Right ventricle myocardium superior (tissue), 1 donor: ENCODE measurements at regions of chr1 and their contacts with region 1.

Region 1: DNA sequence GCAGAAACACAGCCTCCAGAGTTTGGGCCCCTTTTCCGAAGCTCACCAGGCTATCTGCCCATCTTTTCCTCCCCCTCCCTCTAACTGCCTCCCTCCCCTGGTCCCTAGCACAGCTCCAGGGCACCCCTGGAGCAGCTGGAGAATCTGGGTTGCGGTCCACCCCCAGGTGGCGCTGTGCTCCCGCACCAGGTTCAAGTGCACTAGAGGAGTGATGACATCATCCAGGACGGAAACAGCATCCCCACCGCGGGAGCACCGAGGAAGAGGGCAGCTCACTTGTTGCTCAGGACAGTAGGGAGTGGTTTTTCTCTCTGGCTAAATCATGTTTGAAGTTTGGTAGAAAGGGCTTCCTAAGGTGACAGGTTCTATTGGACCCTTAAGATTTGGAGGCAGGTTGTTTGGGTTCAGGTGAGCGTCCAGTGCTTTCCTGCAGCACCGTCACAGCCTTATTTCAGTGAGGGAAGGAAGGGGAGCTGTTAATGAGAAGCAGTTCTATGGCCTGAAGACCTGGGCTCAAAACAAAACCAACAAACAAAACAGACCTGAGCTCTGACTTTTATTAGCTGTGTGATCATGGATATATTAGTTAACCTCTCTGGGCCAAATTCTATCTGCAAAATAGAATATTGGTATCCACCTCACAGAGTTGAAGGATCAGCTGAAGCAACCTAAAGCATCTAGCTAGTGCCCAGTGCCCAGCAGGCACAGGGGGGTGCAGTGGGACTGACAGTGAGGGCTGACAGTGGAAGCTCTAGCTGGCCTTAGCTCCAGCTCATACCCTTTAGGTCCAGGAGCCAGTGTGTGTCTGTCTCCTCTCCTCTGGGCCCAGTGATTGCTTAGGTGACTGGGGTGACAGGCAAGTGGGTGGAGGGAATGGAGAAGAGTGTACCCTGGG is 7.5 kb downstream of the SHISA4 start:
- DNase-seq: peak; percentile 94
- ATAC-seq: peak; percentile 91

Region 2: DNA sequence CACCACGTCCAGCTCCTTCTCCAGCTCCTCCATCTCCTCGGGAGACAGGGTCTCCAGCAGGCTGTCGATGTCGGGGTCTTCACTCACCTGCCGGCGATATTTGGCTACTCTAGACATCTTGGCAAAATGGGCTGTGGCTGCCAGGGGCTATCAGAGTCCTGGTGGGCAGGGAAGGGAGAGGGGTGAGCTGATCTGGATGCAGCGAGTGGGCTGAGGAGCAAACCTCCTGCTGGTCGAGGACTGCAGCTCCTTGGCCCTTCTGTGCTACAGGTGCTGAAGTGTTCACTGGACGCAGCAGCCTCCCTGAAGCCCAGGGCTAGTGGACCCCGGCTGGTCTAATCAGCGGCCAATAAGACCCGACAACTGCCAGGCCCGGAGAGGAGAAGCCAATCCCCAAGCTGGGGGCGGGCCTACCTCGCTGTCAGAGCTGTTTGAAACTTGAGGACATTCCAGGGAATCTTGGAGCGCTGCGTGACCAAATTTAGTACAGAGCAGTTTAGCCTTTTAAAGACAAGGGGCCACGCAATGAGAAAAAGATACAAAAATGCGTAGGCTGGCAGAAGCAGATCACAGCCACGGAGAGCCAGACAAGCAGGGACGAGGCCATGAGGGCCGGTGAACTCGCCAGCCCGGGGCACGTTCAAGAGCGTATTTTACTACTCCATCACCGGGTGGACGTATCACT is 50.2 kb after region 1 on chr1 and contains the start of gene LMOD1:
- intact Hi-C with region 1: loop called (anchors 5 kb)
- DNase-seq: peak; percentile 90
- ATAC-seq: peak; percentile 94
- total RNA-seq, gene LMOD1: 9.6 TPM

Region 3: GRCh38 chr1:201970334-201971159 is 74.4 kb after region 1 on chr1:
- intact Hi-C with region 1: loop called (anchors 5 kb)
- DNase-seq: no peak
- ATAC-seq: no peak